ENCODE measurements at regions of chr1 and their contacts with region 1.

Region 1: GRCh38 chr1:198601936-198602889 is 36.6 kb upstream of the PTPRC start:
- DNase-seq: peak; percentile 87
- H3K4me3 Mint-ChIP-seq: peak overlapping the region; percentile 51
- H3K27ac Mint-ChIP-seq: peak overlapping the region; percentile 85
- H3K4me1 Mint-ChIP-seq: peaks cover 87% of the 10 kb centered on the region
- H3K27me3 Mint-ChIP-seq: no peaks in the 10 kb centered on the region

Region 2: GRCh38 chr1:198167436-198167934 is 434.7 kb before region 1 on chr1:
- CTCF ChIA-PET with region 1: no interaction called
- intact Hi-C with region 1: loop called (anchors 2 kb)
- DNase-seq: peak; percentile 44
- H3K4me3 Mint-ChIP-seq: peak overlapping the region; percentile 55
- H3K27ac Mint-ChIP-seq: peak overlapping the region; percentile 93
- H3K4me1 Mint-ChIP-seq: peaks cover 90% of the 10 kb centered on the region
- H3K27me3 Mint-ChIP-seq: no peaks in the 10 kb centered on the region

Region 3: DNA sequence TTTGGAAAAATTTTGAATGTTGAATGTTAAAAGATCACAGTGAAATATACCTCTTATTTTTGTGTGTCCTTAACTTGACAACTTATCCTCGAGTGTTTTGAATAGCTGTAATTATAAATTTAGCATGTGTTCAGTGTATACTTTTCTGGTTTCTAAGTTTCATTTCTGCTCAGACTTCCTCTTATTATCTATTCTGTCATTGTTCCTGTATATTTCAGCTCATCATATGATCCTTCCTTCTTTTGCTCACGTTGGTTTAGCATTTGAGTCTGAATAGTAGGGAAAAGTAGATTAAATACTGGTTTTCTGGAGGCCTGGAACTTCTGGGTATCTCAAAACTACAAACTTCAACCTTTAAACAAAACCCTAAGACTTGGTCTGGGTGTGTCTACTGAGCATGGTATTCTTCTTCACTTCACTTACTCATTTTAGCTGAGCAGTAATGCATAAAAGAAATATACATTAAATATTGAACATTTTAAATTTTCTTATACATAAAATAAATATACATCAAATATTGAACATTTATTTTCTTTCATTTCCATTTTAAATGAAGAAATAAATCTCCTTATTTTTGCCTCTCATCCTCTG is 58.4 kb before region 1 on chr1:
- CTCF ChIA-PET with region 1: no interaction called
- intact Hi-C with region 1: loop called (anchors 5 kb)
- DNase-seq: no peak
- H3K4me3 Mint-ChIP-seq: peak overlapping the region; percentile 33
- H3K27ac Mint-ChIP-seq: peak overlapping the region; percentile 76
- H3K4me1 Mint-ChIP-seq: peaks cover 53% of the 10 kb centered on the region
- H3K27me3 Mint-ChIP-seq: no peaks in the 10 kb centered on the region

Region 4: GRCh38 chr1:198620951-198621824 is 19.0 kb after region 1 on chr1:
- CTCF ChIA-PET with region 1: interaction called, 18 read pairs
- intact Hi-C with region 1: loop called (anchors 1 kb)
- DNase-seq: peak; percentile 77
- H3K4me3 Mint-ChIP-seq: peak overlapping the region; percentile 82
- H3K27ac Mint-ChIP-seq: peak overlapping the region; percentile 100
- H3K4me1 Mint-ChIP-seq: peaks cover 86% of the 10 kb centered on the region
- H3K27me3 Mint-ChIP-seq: no peaks in the 10 kb centered on the region

Region 5: DNA sequence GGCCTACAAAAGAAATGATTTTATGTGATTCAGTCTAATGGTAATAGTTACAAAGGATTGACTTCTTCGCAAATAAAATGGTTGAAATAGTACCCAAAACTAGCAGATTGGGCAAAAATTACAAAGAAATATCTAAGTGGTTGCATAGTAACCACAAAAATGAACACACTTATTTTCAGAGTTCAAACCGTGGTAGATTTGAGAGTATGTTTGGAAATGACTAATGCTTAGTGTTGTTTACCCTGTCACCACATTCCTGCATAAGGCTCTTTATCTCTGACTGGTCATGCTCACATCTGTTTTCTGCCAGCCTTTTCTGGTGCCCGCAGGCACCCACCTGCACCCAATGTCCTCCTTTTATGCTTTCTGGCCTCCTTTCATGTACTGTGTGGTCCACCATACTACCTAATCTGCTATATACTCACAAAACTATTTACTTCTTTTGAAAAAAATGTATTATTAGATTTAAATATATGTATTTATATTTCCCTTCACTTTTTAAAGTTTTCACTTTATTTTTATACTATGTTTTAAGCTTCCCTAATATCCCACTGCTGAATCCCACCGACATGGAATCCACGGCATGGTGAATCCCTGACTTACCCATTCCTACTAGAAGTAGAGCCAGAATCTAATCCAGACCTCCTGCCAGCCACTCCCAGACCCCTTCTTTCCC is 66.9 kb after region 1 on chr1:
- CTCF ChIA-PET with region 1: no interaction called
- intact Hi-C with region 1: loop called (anchors 1 kb)
- DNase-seq: peak; percentile 46
- H3K4me3 Mint-ChIP-seq: peak overlapping the region; percentile 57
- H3K27ac Mint-ChIP-seq: peak overlapping the region; percentile 84
- H3K4me1 Mint-ChIP-seq: peaks cover 87% of the 10 kb centered on the region
- H3K27me3 Mint-ChIP-seq: no peaks in the 10 kb centered on the region

Region 6: DNA sequence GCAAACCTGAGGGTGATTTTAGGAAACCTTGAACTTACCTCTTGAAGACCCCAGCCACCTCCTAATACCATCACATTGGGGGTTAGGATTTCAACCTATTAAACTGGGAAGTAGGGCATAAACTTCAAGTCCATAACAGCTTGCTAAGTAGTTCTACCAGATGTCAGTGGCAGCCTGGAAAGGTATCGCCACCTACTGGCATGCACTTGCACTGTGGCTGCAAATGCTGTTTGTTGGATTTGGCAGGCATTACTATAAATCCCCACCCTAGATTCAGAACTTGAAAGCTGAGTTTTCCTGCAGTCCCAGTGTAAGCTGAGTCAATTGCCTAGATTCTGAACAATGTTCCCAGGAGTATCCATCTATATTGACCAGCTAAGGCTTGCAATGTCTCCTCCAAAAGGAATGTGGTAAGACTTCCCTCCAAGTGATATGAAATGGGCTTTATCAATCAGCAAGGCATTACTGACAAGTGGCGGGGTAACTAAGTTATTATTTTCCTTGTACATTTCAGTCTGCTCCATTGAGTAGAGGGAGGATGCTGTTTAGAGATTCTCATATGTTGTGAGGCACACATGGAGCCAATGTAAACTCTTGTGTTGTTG is 511.2 kb after region 1 on chr1:
- CTCF ChIA-PET with region 1: no interaction called
- intact Hi-C with region 1: loop called (anchors 10 kb)
- DNase-seq: peak; percentile 87
- H3K4me3 Mint-ChIP-seq: no peak overlapping the region
- H3K27ac Mint-ChIP-seq: no peak overlapping the region
- H3K4me1 Mint-ChIP-seq: no peaks in the 10 kb centered on the region
- H3K27me3 Mint-ChIP-seq: no peaks in the 10 kb centered on the region

Region 7: DNA sequence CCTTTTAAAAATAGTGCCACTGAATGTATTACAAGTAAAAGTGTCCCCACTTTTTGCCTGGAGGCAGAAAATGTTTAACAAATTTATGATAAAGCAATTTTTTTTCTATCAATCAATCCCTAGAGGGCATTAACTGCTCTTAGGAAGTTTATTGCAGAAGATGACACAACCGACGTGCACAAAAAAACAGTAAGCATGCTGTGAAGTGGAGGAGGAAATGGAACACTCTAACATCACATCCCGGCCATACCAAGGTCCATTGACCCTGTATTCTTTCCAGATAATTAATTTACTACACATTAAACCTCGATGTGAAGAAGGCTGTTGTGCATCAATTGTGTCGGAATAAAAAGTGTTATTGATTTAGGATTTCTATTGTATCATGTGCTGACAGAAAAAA is 1160.4 kb after region 1 on chr1:
- CTCF ChIA-PET with region 1: no interaction called
- intact Hi-C with region 1: no loop called
- DNase-seq: no peak
- H3K4me3 Mint-ChIP-seq: no peak overlapping the region
- H3K27ac Mint-ChIP-seq: no peak overlapping the region
- H3K4me1 Mint-ChIP-seq: no peaks in the 10 kb centered on the region
- H3K27me3 Mint-ChIP-seq: peaks cover 22% of the 10 kb centered on the region